ENCODE measurements at regions of chr19 and their contacts with region 1.

Region 1: GRCh38 chr19:44141191-44142058 is at the start of gene ZNF234:
- DNase-seq: peak; percentile 35 to 84 (median 57)
- ATAC-seq: peak; percentile 86
- H3K4me3 ChIP-seq: peak within 1 kb of the TSS; percentile 84
- H3K4me3 Mint-ChIP-seq: peak within 1 kb of the TSS; percentile 92
- H3K27ac ChIP-seq: peak within 1 kb of the TSS; percentile 16 to 61
- H3K27ac Mint-ChIP-seq: peak within 1 kb of the TSS; percentile 79
- H3K4me1 ChIP-seq: peaks cover 13% of the 10 kb centered on the region
- H3K4me1 Mint-ChIP-seq: peaks cover 25% of the 10 kb centered on the region
- H3K27me3 ChIP-seq: no peaks in the 10 kb centered on the region
- H3K27me3 Mint-ChIP-seq: no peaks in the 10 kb centered on the region
- CTCF ChIP-seq: no peak
- total RNA-seq, gene ZNF234: 1.4 to 1.6 TPM

Region 2: DNA sequence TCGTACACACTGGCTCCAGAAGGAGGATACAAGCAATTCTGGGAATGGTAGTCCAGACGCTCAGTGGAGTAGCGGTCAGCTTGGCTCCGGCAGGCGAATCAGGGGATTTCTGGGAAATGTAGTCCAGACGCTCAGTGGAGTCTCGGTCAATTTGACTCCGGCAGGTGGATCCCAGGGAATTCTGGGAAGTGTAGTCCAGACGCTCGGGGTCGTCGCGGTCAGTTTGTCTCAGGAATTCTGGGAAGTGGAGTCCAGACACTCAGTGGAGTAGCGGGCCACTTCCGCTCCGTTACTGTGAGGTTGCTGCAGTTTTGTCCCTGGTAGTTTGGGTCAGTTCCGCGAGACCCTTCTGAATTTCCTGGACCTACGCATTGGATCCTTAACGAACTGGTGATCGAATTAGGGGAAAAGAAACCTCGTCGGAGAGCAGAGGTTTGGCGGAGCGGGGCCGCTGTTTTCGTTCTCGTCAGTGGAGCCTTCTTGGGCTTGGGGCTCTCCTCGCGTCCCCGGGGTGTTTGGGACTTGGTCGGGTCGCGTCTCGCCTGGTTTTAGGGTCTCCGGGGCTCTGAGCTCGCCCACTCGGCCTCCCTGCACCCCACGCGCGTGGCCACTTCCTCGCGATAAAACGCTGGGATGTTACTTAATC is 28.2 kb before region 1 on chr19 and contains the start of gene ZNF225:
- CTCF ChIA-PET with region 1: no interaction called
- POLR2A ChIA-PET with region 1: interaction called, 8 read pairs
- intact Hi-C with region 1: loop called in 1 of 2 experiments (anchors 1 kb)
- DNase-seq: peak; percentile 55 to 94 (median 72)
- ATAC-seq: peak; percentile 89
- H3K4me3 ChIP-seq: peak within 1 kb of the TSS; percentile 75
- H3K4me3 Mint-ChIP-seq: peak within 1 kb of the TSS; percentile 95
- H3K27ac ChIP-seq: peak within 1 kb of the TSS in 1 of 2 donors; percentile 29
- H3K27ac Mint-ChIP-seq: peak within 1 kb of the TSS; percentile 57
- H3K4me1 ChIP-seq: peaks cover 17% of the 10 kb centered on the region
- H3K4me1 Mint-ChIP-seq: peaks cover 37% of the 10 kb centered on the region
- H3K27me3 ChIP-seq: no peaks in the 10 kb centered on the region
- H3K27me3 Mint-ChIP-seq: no peaks in the 10 kb centered on the region
- CTCF ChIP-seq: no peak
- total RNA-seq, gene ZNF225: 0.71 to 0.73 TPM

Measured in CD4-positive, alpha-beta T cell (primary cell).